Naive thymus-derived CD4-positive, alpha-beta T cell (primary cell): ENCODE measurements at regions of chr2 and their contacts with region 1.

Region 1: DNA sequence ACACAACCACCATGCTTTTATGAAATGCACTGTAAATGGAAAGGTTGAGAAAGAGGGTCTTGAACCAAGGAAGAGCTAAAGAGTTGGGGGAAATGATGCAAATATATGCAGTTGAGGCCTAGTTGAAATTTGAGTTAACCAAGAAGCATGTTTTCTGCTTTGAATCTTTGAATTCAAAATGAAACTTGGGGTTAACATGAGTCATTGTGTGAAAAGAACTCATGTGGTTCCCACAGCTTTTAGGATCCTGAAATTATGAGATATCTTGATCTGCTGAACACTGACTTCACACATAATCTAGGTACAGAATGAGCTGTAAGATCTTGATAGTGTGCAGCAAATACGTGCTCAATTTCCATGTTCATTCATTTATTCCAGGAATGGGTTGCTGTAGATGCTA is 422.9 kb upstream of the TRIB2 start:
- DNase-seq: no peak
- ATAC-seq: peak; percentile 27
- H3K4me3 ChIP-seq: no peak overlapping the region
- H3K4me3 Mint-ChIP-seq: peak overlapping the region in 5 of 10 donors; percentile 13 to 75 (median 60)
- H3K27ac ChIP-seq: no peak overlapping the region
- H3K27ac Mint-ChIP-seq: peak overlapping the region in 4 of 9 donors; percentile 18 to 90 (median 68)
- H3K4me1 ChIP-seq: peaks cover 0 to 16% of the 10 kb centered on the region in 2 donors
- H3K4me1 Mint-ChIP-seq: peaks cover 19 to 53% (median 40%) of the 10 kb centered on the region in 7 donors
- H3K27me3 ChIP-seq: no peaks in the 10 kb centered on the region
- H3K27me3 Mint-ChIP-seq: peaks cover 0 to 4% (median 0%) of the 10 kb centered on the region in 5 donors

Region 2: DNA sequence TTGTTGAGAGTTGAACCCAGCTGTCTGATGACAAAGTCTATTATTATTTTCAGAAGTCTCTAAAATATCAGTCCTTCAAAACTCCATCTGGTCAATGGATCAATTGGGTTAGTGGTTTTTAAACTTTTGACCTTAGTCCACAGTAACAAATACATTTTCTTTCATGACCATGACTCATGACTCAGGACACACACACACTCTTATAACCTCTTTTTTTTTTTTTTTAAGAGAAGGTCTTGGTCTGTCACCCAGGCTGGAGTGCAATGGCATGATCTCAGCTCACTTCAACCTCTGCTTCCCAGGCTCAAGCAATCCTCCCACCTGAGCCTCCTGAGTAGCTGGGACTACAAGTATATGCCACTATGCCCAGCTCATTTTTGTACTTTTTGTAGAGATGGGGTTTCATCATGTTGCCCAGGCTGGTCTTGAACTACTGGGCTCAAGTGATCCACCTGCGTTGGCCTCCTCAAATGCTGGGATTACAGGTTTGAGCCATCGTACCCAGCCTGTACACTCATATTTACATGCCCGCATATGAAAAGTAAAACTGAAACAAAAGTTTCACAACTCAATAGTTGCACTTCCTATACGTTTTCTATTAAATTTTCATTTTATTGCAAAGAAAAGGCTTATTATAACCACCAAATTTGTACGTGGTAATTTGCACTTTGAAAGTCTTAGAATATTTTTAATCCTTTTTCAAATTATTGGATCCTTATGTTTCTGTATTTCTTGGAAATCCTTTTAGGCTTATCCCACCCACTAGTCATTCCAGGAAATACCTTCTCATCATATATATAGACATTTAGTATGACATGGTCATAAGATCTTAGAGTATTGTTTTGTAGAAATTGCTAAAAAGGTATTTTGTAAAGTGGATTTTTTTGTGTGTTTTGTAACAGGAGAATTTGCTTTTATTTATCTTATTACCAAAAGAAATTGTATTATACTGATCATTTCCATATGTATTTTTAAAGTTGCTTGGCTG is 348.4 kb before region 1 on chr2:
- CTCF ChIA-PET with region 1: no interaction called
- POLR2A ChIA-PET with region 1: no interaction called
- intact Hi-C with region 1: loop called in 1 of 2 experiments (anchors 5 kb)
- DNase-seq: peak in 1 of 9 donors; percentile 6
- ATAC-seq: peak; percentile 69
- H3K4me3 ChIP-seq: peak overlapping the region; percentile 40
- H3K4me3 Mint-ChIP-seq: peak overlapping the region; percentile 61 to 83 (median 80)
- H3K27ac ChIP-seq: no peak overlapping the region
- H3K27ac Mint-ChIP-seq: peak overlapping the region; percentile 75 to 96 (median 80)
- H3K4me1 ChIP-seq: peaks cover 5 to 11% of the 10 kb centered on the region in 2 donors
- H3K4me1 Mint-ChIP-seq: peaks cover 0 to 25% (median 16%) of the 10 kb centered on the region in 7 donors
- H3K27me3 ChIP-seq: no peaks in the 10 kb centered on the region
- H3K27me3 Mint-ChIP-seq: peaks cover 0 to 6% (median 0%) of the 10 kb centered on the region in 5 donors

Region 3: DNA sequence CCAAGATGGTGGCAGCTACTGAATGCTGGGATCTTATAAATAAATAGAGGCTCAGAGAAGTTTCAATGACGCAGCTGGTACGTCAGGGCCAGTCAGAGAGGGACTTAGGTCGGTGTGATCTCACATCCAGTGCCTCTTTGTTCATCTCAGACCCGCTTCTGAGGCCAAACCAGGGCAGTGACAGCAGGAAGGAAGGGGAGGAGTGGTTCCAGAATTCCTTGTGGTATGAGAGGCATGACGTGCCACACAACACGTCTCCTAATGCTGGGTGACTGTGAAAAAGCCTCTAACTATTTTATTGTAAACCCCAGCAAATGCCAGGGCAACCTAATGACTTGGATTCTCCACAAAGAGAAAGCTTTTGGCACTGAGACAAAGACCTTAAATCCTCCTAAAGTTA is 124.2 kb before region 1 on chr2:
- CTCF ChIA-PET with region 1: no interaction called
- POLR2A ChIA-PET with region 1: no interaction called
- intact Hi-C with region 1: loop called in 1 of 2 experiments (anchors 5 kb)
- DNase-seq: peak in 6 of 9 donors; percentile 33 to 63 (median 47)
- ATAC-seq: peak; percentile 79
- H3K4me3 ChIP-seq: no peak overlapping the region
- H3K4me3 Mint-ChIP-seq: peak overlapping the region in 7 of 10 donors; percentile 33 to 74 (median 60)
- H3K27ac ChIP-seq: no peak overlapping the region
- H3K27ac Mint-ChIP-seq: peak overlapping the region in 7 of 9 donors; percentile 9 to 86 (median 73)
- H3K4me1 ChIP-seq: peaks cover 0 to 25% of the 10 kb centered on the region in 2 donors
- H3K4me1 Mint-ChIP-seq: peaks cover 28 to 55% (median 44%) of the 10 kb centered on the region in 7 donors
- H3K27me3 ChIP-seq: no peaks in the 10 kb centered on the region
- H3K27me3 Mint-ChIP-seq: peaks cover 0 to 3% (median 0%) of the 10 kb centered on the region in 5 donors

Region 4: GRCh38 chr2:12227941-12228608 is 65.8 kb before region 1 on chr2:
- CTCF ChIA-PET with region 1: no interaction called
- POLR2A ChIA-PET with region 1: no interaction called
- intact Hi-C with region 1: no loop called
- DNase-seq: no peak
- ATAC-seq: no peak
- H3K4me3 ChIP-seq: no peak overlapping the region
- H3K4me3 Mint-ChIP-seq: no peak overlapping the region
- H3K27ac ChIP-seq: no peak overlapping the region
- H3K27ac Mint-ChIP-seq: no peak overlapping the region
- H3K4me1 ChIP-seq: no peaks in the 10 kb centered on the region
- H3K4me1 Mint-ChIP-seq: peaks cover 0 to 1% (median 0%) of the 10 kb centered on the region in 7 donors
- H3K27me3 ChIP-seq: no peaks in the 10 kb centered on the region
- H3K27me3 Mint-ChIP-seq: peaks cover 0 to 16% (median 0%) of the 10 kb centered on the region in 5 donors

Region 5: GRCh38 chr2:13067508-13067907 is 773.6 kb after region 1 on chr2:
- CTCF ChIA-PET with region 1: no interaction called
- POLR2A ChIA-PET with region 1: no interaction called
- intact Hi-C with region 1: no loop called
- DNase-seq: no peak
- ATAC-seq: no peak
- H3K4me3 ChIP-seq: no peak overlapping the region
- H3K4me3 Mint-ChIP-seq: no peak overlapping the region
- H3K27ac ChIP-seq: no peak overlapping the region
- H3K27ac Mint-ChIP-seq: no peak overlapping the region
- H3K4me1 ChIP-seq: no peaks in the 10 kb centered on the region
- H3K4me1 Mint-ChIP-seq: no peaks in the 10 kb centered on the region
- H3K27me3 ChIP-seq: no peaks in the 10 kb centered on the region
- H3K27me3 Mint-ChIP-seq: peaks cover 5 to 57% (median 30%) of the 10 kb centered on the region in 5 donors